ENCODE measurements at regions of chr14 and their contacts with region 1.

Region 1: GRCh38 chr14:91041450-91041849 is 19.0 kb downstream of the RPS6KA5 start:
- DNase-seq: no peak
- ATAC-seq: no peak
- H3K4me3 Mint-ChIP-seq: no peak overlapping the region
- H3K27ac Mint-ChIP-seq: no peak overlapping the region
- H3K4me1 Mint-ChIP-seq: peaks cover 45% of the 10 kb centered on the region
- H3K27me3 Mint-ChIP-seq: no peaks in the 10 kb centered on the region
- CTCF ChIP-seq: no peak

Region 2: GRCh38 chr14:90774316-90774715 is 267.1 kb before region 1 on chr14:
- CTCF ChIA-PET with region 1: no interaction called
- POLR2A ChIA-PET with region 1: no interaction called
- intact Hi-C with region 1: no loop called
- DNase-seq: no peak
- ATAC-seq: no peak
- H3K4me3 Mint-ChIP-seq: no peak overlapping the region
- H3K27ac Mint-ChIP-seq: no peak overlapping the region
- H3K4me1 Mint-ChIP-seq: no peaks in the 10 kb centered on the region
- H3K27me3 Mint-ChIP-seq: no peaks in the 10 kb centered on the region
- CTCF ChIP-seq: no peak

Region 3: DNA sequence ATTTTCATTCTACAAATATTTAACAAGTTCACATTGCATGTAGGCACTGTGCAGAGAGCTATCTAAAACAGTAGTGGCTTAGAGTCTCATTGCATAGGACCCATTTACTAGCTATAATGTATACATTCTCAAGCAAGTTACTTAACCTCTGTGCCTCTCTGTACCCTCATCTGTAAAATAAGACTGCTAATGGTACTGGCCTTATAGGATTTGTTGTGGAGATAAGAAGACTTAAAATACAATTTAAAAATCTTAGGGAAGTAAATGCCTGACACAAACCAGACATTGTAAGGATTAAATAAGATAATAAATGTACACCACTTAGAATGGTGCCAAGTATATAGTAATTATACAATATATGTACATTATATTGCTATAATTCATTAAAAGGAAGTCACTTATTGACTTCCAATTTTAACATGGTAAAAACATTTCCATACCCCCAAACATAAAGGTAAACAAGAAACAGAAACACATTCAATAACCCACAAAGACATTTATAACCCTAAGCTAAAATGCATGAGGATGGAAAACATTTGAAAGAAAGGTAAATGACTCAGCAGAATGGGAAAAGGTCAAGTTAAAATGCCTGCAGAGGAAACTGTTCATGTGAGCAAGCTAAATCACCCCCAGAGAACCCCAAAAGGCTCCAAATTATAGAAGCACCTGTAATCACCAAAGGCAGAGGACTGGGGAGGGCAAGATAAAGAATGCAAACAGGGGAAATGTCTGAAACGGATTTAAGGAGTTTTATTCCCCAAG is 11.8 kb before region 1 on chr14:
- CTCF ChIA-PET with region 1: no interaction called
- POLR2A ChIA-PET with region 1: interaction called, 3 read pairs
- intact Hi-C with region 1: loop called (anchors 2 kb)
- DNase-seq: no peak
- ATAC-seq: no peak
- H3K4me3 Mint-ChIP-seq: no peak overlapping the region
- H3K27ac Mint-ChIP-seq: no peak overlapping the region
- H3K4me1 Mint-ChIP-seq: peaks cover 54% of the 10 kb centered on the region
- H3K27me3 Mint-ChIP-seq: no peaks in the 10 kb centered on the region
- CTCF ChIP-seq: no peak

Region 4: GRCh38 chr14:91341751-91342154 is 300.3 kb after region 1 on chr14:
- CTCF ChIA-PET with region 1: no interaction called
- POLR2A ChIA-PET with region 1: no interaction called
- intact Hi-C with region 1: no loop called
- DNase-seq: no peak
- ATAC-seq: no peak
- H3K4me3 Mint-ChIP-seq: no peak overlapping the region
- H3K27ac Mint-ChIP-seq: no peak overlapping the region
- H3K4me1 Mint-ChIP-seq: peaks cover 43% of the 10 kb centered on the region
- H3K27me3 Mint-ChIP-seq: no peaks in the 10 kb centered on the region
- CTCF ChIP-seq: no peak